Activated CD4-positive, alpha-beta T cell treated with anti-CD3 and anti-CD28 coated beads for 36 hours (primary cell): ENCODE measurements at regions of chr11 and their contacts with region 1.

Region 1: GRCh38 chr11:68751004-68751856 is at the start of gene TESMIN:
- DNase-seq: peak; percentile 97
- ATAC-seq: peak; percentile 96
- H3K4me3 Mint-ChIP-seq: peak within 1 kb of the TSS; percentile 65
- H3K27ac Mint-ChIP-seq: peak within 1 kb of the TSS; percentile 65
- H3K4me1 Mint-ChIP-seq: peaks cover 2% of the 10 kb centered on the region
- H3K27me3 Mint-ChIP-seq: no peaks in the 10 kb centered on the region
- total RNA-seq, gene TESMIN: 2.9 to 3.5 TPM

Region 2: DNA sequence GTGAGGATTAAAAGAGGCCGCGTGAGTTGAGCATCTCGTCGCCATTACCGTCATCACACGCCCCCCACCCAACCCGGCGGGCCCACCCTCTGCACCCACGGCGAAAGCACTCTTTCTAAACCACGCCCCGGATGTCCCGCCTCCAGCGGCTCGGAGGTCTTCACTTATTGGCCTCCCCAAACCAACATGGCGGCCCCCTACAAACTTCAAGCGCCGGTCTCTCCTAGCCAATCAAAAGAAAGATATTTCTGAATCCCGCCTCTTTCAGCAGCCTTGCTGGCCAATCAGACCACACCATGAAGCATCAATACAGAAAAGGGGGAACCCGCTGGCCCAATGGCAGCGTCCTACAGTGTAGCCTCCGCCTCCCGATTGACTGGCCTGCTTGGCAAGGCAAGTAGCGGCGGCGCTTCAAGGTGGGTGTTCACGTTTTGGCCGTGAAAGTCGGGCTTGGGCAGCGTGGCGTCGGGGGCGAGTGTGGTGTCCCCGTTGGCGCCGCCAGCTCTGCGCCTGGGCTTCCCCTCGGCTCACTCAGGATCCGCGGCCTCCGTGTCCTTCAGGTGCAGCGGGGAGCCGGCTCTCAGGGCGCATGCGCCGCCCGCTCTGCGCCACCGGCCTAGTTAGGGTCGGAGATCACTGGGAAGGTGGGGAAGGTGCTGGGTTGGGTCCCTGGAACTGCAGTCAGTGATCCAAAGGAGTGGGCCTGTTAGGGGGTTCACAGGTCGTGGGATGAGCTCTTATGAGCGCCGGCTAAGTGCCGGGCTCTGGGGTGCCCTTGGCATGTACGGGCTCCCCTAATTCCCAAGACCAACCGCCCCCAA is 720.7 kb before region 1 on chr11 and contains the start of gene NDUFS8:
- CTCF ChIA-PET with region 1: no interaction called
- POLR2A ChIA-PET with region 1: no interaction called
- intact Hi-C with region 1: loop called in 1 of 2 experiments (anchors 1 kb)
- DNase-seq: peak; percentile 97
- ATAC-seq: peak; percentile 99
- H3K4me3 Mint-ChIP-seq: peak within 1 kb of the TSS; percentile 96
- H3K27ac Mint-ChIP-seq: peak within 1 kb of the TSS; percentile 95
- H3K4me1 Mint-ChIP-seq: peaks cover 26% of the 10 kb centered on the region
- H3K27me3 Mint-ChIP-seq: no peaks in the 10 kb centered on the region
- total RNA-seq, gene NDUFS8: 108 to 113 TPM

Region 3: GRCh38 chr11:68121067-68121899 is 629.9 kb before region 1 on chr11 and contains the start of gene CHKA:
- CTCF ChIA-PET with region 1: no interaction called
- POLR2A ChIA-PET with region 1: no interaction called
- intact Hi-C with region 1: loop called in 1 of 2 experiments (anchors 10 kb)
- DNase-seq: peak; percentile 94
- ATAC-seq: peak; percentile 97
- H3K4me3 Mint-ChIP-seq: peak within 1 kb of the TSS; percentile 71
- H3K27ac Mint-ChIP-seq: peak within 1 kb of the TSS; percentile 68
- H3K4me1 Mint-ChIP-seq: peaks cover 7% of the 10 kb centered on the region
- H3K27me3 Mint-ChIP-seq: no peaks in the 10 kb centered on the region
- total RNA-seq, gene CHKA: 5.5 to 7.5 TPM

Region 4: DNA sequence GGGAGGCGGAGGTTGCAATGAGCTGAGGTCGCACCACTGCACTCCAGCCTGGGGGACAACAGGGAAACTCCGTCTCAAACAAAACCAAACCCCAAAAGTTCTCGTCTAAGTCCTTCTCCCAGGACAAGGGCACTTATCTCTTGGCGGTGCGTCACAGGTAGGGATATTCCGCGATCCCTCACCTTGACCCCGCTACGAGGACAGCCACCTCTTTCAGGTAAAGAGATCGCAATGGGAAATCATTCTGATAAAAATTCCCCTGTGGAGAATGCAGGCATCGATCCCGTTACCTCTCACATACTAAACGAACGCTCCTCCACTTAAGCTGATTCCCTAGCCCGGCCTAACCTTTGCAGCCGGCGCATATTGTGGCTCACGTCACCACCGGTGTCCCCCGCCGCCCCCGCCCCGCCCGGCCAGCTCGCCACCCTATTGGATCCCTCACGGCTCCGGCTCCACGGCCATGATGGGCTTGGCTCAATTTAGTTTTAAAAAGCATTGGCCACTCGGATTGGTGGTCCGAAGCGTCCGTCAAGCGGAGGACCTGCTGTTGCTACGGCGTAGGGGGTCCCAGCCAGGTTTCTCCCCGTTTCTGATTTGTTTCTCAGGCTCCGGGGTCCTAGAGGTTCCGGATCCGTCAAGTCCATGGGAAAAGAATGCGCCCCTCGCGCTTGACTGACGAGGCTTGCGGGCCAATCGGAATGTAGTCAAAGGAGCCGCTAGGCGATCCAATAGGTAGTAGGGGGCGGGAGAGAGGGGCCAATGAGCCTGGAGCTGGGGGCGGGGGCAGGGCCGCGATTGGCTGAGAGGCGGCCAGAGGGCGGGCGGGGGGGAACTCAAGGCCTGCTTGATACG is 291.1 kb before region 1 on chr11:
- CTCF ChIA-PET with region 1: no interaction called
- POLR2A ChIA-PET with region 1: interaction called, 3 read pairs
- intact Hi-C with region 1: loop called in 1 of 2 experiments (anchors 1 kb)
- DNase-seq: peak; percentile 97
- ATAC-seq: peak; percentile 93
- H3K4me3 Mint-ChIP-seq: peak overlapping the region; percentile 86
- H3K27ac Mint-ChIP-seq: peak overlapping the region; percentile 89
- H3K4me1 Mint-ChIP-seq: peaks cover 31% of the 10 kb centered on the region
- H3K27me3 Mint-ChIP-seq: no peaks in the 10 kb centered on the region

Region 5: GRCh38 chr11:68684385-68685356 is 66.6 kb before region 1 on chr11 and contains the start of gene GAL:
- CTCF ChIA-PET with region 1: no interaction called
- POLR2A ChIA-PET with region 1: no interaction called
- intact Hi-C with region 1: no loop called
- DNase-seq: peak; percentile 42
- ATAC-seq: peak; percentile 76
- H3K4me3 Mint-ChIP-seq: peak within 1 kb of the TSS; percentile 28
- H3K27ac Mint-ChIP-seq: no peak within 1 kb of the TSS
- H3K4me1 Mint-ChIP-seq: peaks cover 5% of the 10 kb centered on the region
- H3K27me3 Mint-ChIP-seq: peaks cover 34% of the 10 kb centered on the region
- total RNA-seq, gene GAL: 2.2 to 2.5 TPM

Region 6: GRCh38 chr11:68867066-68867465 is 115.8 kb after region 1 on chr11:
- CTCF ChIA-PET with region 1: no interaction called
- POLR2A ChIA-PET with region 1: no interaction called
- intact Hi-C with region 1: no loop called
- DNase-seq: no peak
- ATAC-seq: no peak
- H3K4me3 Mint-ChIP-seq: no peak overlapping the region
- H3K27ac Mint-ChIP-seq: no peak overlapping the region
- H3K4me1 Mint-ChIP-seq: peaks cover 12% of the 10 kb centered on the region
- H3K27me3 Mint-ChIP-seq: peaks cover 24% of the 10 kb centered on the region

Region 7: GRCh38 chr11:68903288-68904247 is 152.3 kb after region 1 on chr11 and contains the starts of genes IGHMBP2 and MRPL21:
- CTCF ChIA-PET with region 1: no interaction called
- POLR2A ChIA-PET with region 1: no interaction called
- intact Hi-C with region 1: loop called in 1 of 2 experiments (anchors 1 kb)
- DNase-seq: peak; percentile 93
- ATAC-seq: peak; percentile 94
- H3K4me3 Mint-ChIP-seq: peak within 1 kb of the TSS; percentile 93
- H3K27ac Mint-ChIP-seq: peak within 1 kb of the TSS; percentile 91
- H3K4me1 Mint-ChIP-seq: peaks cover 29% of the 10 kb centered on the region
- H3K27me3 Mint-ChIP-seq: no peaks in the 10 kb centered on the region
- total RNA-seq, gene IGHMBP2: 20.9 to 25.4 TPM
- total RNA-seq, gene MRPL21: 100 to 102 TPM

Region 8: DNA sequence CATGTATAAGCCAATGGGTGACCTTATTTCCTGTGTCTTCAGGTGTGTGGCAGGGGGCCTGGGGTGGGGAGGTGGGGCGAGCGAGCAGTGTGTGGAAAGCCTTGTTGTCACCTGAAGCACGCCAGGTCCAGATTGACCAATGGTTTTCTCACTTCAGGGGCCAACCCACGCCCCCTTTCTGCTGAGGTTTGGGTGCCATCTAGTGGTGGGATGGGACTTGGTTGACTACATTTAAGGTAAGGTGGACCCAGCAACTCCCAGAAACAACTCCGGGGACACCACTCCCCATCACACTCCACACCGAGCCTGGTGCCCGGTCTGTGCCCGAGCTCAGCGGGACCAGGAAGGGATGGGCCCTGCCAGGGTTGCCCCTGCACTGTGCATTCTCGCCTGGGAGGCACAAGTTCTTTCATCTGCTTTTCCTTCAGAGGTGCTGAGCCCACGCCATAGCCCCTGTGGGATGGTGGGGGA is 337.5 kb after region 1 on chr11:
- CTCF ChIA-PET with region 1: no interaction called
- POLR2A ChIA-PET with region 1: no interaction called
- intact Hi-C with region 1: loop called in 1 of 2 experiments (anchors 1 kb)
- DNase-seq: peak; percentile 78
- ATAC-seq: peak; percentile 63
- H3K4me3 Mint-ChIP-seq: no peak overlapping the region
- H3K27ac Mint-ChIP-seq: no peak overlapping the region
- H3K4me1 Mint-ChIP-seq: no peaks in the 10 kb centered on the region
- H3K27me3 Mint-ChIP-seq: no peaks in the 10 kb centered on the region

Region 9: GRCh38 chr11:69670158-69670845 is 919.1 kb after region 1 on chr11:
- CTCF ChIA-PET with region 1: no interaction called
- POLR2A ChIA-PET with region 1: no interaction called
- intact Hi-C with region 1: loop called in 1 of 2 experiments (anchors 2 kb)
- DNase-seq: peak; percentile 77
- ATAC-seq: peak; percentile 38
- H3K4me3 Mint-ChIP-seq: no peak overlapping the region
- H3K27ac Mint-ChIP-seq: no peak overlapping the region
- H3K4me1 Mint-ChIP-seq: peaks cover 26% of the 10 kb centered on the region
- H3K27me3 Mint-ChIP-seq: no peaks in the 10 kb centered on the region